Endothelial cell of umbilical vein (primary cell): ENCODE measurements at regions of chr11 and their contacts with region 1.

Region 1: GRCh38 chr11:124793466-124794278 is 6.5 kb downstream of the MSANTD2 start:
- DNase-seq: peak; percentile 70
- H3K4me3 ChIP-seq: no peak overlapping the region
- H3K27ac ChIP-seq: no peak overlapping the region
- H3K4me1 ChIP-seq: peaks cover 9% of the 10 kb centered on the region
- H3K27me3 ChIP-seq: no peaks in the 10 kb centered on the region
- CTCF ChIP-seq: peak; percentile 64
- POLR2A ChIP-seq: no peak

Region 2: DNA sequence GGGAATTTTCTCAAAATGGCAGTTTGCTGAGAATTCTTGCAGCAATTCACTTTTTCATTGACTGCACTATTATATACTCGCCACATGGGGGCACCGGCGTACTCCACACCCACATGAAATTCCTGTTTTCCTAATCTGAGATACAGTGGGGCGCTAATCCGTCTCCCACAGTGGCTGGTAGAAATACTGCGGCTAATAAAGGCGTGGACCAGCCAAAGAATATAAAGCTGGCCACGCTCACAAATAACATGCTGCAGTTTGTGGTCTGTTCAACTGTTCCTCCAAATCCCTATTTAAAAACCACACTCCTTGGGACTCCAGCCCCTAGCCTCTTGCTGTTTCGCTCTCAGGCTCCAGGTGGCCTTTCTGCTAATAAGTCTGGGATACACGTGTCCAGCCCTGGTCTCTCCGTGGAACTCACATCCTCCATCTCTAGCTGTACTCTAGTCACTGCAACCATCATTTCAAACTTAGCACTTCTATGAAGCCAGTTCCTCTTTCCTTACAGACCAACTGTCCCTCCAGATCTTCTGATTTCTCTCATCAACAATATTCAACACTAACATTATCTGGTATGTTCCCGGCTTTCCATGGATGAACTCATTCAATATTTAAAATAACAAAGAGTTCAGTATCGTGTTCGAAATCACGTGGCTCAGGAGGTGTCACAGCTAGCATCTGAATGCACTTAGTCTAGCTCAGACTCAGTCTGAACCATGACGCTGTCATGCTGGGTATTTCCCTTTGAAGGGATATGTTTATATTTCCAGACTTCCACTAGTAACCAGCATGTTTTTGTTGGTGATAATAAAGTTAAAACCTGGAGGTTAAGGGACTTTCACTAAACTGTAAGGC is 149.0 kb before region 1 on chr11:
- CTCF ChIA-PET with region 1: interaction called, 34 read pairs
- POLR2A ChIA-PET with region 1: no interaction called
- dilution Hi-C with region 1: no loop called
- intact Hi-C with region 1: loop called (anchors 1 kb)
- DNase-seq: peak; percentile 87
- H3K4me3 ChIP-seq: peak overlapping the region in 1 of 3 experiments; percentile 32
- H3K27ac ChIP-seq: peak overlapping the region; percentile 22
- H3K4me1 ChIP-seq: peaks cover 18% of the 10 kb centered on the region
- H3K27me3 ChIP-seq: no peaks in the 10 kb centered on the region
- CTCF ChIP-seq: peak; percentile 56 to 79
- POLR2A ChIP-seq: no peak

Region 3: DNA sequence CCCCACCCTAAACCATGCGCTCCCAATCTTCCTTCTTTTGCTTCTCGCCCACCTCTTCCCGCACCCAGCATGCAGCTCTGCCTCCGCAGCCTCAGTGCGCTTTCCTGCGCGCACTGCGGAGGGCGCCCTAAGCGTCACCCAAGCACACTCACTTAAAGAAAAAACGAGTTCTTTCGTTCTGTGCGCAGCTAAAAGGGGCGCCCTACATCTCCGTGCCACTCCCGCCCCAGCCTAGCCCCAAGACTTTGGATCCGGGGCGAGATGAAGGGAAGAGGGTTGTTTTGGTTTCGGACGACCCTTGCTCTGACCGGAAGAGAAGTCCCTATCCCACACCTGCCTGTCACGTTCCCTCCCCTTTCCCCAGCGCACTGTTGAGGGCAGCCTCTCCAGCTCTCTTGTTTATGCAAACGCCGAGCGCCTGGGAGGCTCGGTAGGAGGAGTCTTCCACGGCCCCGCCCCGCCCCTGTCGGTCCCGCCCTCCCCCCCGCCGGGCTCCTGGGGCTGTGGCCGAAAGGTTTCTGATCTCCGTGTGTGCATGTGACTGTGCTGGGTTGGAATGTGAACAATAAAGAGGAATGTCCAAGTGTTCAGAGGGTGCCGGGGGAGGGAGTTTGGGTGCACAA is 46.9 kb before region 1 on chr11:
- CTCF ChIA-PET with region 1: interaction called, 14 read pairs
- POLR2A ChIA-PET with region 1: no interaction called
- dilution Hi-C with region 1: no loop called
- intact Hi-C with region 1: loop called (anchors 1 kb)
- DNase-seq: peak; percentile 93
- H3K4me3 ChIP-seq: peak overlapping the region in 2 of 3 experiments; percentile 36 to 46
- H3K27ac ChIP-seq: peak overlapping the region; percentile 70
- H3K4me1 ChIP-seq: peaks cover 40% of the 10 kb centered on the region
- H3K27me3 ChIP-seq: no peaks in the 10 kb centered on the region
- CTCF ChIP-seq: peak; percentile 62 to 79
- POLR2A ChIP-seq: peak; percentile 72

Region 4: DNA sequence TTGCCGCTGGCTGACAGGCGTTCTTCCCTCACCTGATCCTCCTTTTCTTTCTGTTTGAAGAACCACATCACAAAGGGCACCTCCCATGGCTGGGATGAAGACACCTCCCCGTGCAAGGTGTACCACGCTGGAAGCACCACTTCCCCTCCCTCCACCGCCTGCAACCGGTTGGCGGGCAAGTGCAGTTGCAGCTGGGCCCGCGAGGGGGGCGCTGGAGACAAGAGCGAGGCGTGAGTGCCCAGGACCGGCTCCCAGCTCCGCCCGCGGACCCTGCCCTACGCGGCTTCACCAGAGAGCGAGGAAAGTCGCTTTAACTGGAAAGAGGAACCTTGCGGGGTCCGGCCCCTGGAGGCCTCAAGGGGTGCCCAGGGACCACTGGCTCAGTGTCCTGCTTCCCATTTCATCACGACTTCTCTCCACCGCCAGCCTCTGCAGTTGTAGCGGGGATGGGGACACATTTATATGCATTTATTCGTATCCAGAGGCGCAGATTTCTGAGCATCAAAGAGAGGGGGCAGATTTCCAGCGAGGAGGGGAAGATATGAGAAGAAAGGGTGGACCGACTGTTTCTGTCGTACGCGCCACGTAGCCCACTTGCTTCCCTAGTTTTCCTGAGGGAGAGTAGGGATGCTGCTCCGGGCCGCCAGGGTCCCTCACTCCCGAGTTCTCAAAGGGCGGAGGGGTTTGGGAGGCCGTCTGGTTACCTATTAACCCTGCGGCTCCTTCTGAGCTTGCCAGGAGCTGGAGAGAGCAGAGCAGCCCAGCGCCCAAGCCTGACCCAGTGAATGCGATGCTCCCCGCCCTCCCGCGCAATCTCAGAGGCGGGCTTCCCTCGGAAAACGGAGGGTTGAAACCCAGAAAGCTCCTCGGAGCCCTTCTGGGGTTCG is 35.1 kb before region 1 on chr11:
- CTCF ChIA-PET with region 1: interaction called, 88 read pairs
- POLR2A ChIA-PET with region 1: interaction called, 4 read pairs
- dilution Hi-C with region 1: no loop called
- intact Hi-C with region 1: loop called (anchors 1 kb)
- DNase-seq: peak; percentile 81
- H3K4me3 ChIP-seq: peak overlapping the region; percentile 23 to 65 (median 36)
- H3K27ac ChIP-seq: peak overlapping the region; percentile 97
- H3K4me1 ChIP-seq: peaks cover 65% of the 10 kb centered on the region
- H3K27me3 ChIP-seq: no peaks in the 10 kb centered on the region
- CTCF ChIP-seq: peak; percentile 73 to 91
- POLR2A ChIP-seq: peak; percentile 42

Region 5: GRCh38 chr11:124778281-124778680 is 15.4 kb before region 1 on chr11:
- CTCF ChIA-PET with region 1: interaction called, 54 read pairs
- POLR2A ChIA-PET with region 1: interaction called, 5 read pairs
- dilution Hi-C with region 1: no loop called
- intact Hi-C with region 1: no loop called
- DNase-seq: no peak
- H3K4me3 ChIP-seq: no peak overlapping the region
- H3K27ac ChIP-seq: no peak overlapping the region
- H3K4me1 ChIP-seq: no peaks in the 10 kb centered on the region
- H3K27me3 ChIP-seq: no peaks in the 10 kb centered on the region
- CTCF ChIP-seq: peak in 1 of 2 donors; percentile 26
- POLR2A ChIP-seq: no peak

Region 6: DNA sequence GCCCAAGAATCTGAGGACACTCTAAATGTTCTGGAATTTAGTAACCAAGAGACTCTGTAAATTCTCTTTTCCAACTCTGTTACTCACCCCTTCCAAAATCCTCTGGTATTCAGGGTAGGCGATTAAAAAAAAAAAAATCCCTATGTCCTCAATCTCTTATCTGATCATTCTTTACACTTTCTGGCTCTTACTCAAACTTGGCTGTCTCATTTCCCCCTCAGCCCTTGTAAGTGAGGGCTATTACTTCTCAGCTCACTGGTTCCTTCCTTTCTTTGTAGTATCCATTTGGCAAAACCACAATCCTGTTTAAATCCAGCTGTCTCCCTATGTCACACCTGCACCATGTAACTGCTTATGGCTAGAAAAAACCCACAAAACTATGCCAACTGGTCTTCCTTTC is 19.2 kb after region 1 on chr11:
- CTCF ChIA-PET with region 1: interaction called, 14 read pairs
- POLR2A ChIA-PET with region 1: interaction called, 4 read pairs
- dilution Hi-C with region 1: no loop called
- intact Hi-C with region 1: no loop called
- DNase-seq: peak; percentile 55
- H3K4me3 ChIP-seq: no peak overlapping the region
- H3K27ac ChIP-seq: no peak overlapping the region
- H3K4me1 ChIP-seq: peaks cover 13% of the 10 kb centered on the region
- H3K27me3 ChIP-seq: peaks cover 0 to 4% of the 10 kb centered on the region in 2 experiments
- CTCF ChIP-seq: no peak
- POLR2A ChIP-seq: no peak

Region 7: GRCh38 chr11:125070699-125071254 is 277.1 kb after region 1 on chr11:
- CTCF ChIA-PET with region 1: no interaction called
- POLR2A ChIA-PET with region 1: no interaction called
- dilution Hi-C with region 1: no loop called
- intact Hi-C with region 1: no loop called
- DNase-seq: peak; percentile 22
- H3K4me3 ChIP-seq: no peak overlapping the region
- H3K27ac ChIP-seq: no peak overlapping the region
- H3K4me1 ChIP-seq: peaks cover 8% of the 10 kb centered on the region
- H3K27me3 ChIP-seq: no peaks in the 10 kb centered on the region
- CTCF ChIP-seq: no peak
- POLR2A ChIP-seq: no peak